ENCODE measurements at regions of chr11 and their contacts with region 1.

Region 1: DNA sequence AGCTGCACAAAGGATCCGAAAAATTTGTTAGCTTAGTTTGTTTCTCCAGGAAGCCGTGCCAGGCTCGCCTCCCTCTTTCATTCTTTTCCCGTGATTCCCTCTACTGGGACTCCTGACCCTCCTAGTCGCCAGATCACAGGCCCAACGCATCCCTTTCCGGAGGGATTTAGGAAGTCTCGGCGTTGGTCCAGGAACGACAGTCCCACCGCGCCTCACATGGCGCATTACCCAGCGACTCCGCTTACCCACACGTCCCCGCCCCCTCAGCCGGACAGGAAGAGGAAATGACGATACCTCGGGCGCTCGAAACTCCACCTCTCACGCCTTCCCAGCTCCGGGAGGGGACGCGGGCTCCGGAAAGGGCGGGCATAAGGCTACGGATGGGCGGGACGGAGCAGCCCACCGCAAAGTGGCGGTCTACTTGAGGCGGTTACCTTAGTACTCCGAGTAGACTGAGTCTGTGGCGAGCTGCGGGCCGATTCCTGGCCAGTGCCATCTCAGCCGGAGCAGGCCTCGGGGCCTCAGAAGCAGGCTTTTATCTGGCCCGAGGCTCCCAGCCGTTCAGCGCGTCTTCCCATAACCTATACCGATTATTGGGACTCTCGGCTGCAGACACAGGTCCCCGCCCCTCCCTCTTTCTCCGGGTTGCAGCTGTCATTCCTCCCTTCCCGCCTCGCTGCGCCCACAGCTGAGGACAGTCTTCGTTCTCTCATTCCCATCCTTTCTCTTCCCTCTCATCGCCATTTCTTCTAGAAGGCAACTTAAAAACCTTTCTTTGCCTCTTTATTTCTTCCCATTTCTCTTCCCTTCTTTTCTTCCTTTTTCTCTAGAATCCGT is at the start of gene CCDC15:
- DNase-seq: peak; percentile 88 to 98
- H3K4me3 ChIP-seq: peak within 1 kb of the TSS; percentile 62 to 71
- H3K27ac ChIP-seq: peak within 1 kb of the TSS; percentile 68 to 78
- H3K4me1 ChIP-seq: peaks cover 0 to 8% of the 10 kb centered on the region in 2 donors
- H3K27me3 ChIP-seq: no peaks in the 10 kb centered on the region
- CTCF ChIP-seq: no peak
- total RNA-seq, gene CCDC15: not detected

Region 2: GRCh38 chr11:124622531-124623451 is 331.2 kb before region 1 on chr11 and contains the start of gene TBRG1:
- intact Hi-C with region 1: loop called (anchors 5 kb)
- DNase-seq: peak; percentile 41 to 95
- H3K4me3 ChIP-seq: peak within 1 kb of the TSS; percentile 82 to 94
- H3K27ac ChIP-seq: peak within 1 kb of the TSS; percentile 92 to 98
- H3K4me1 ChIP-seq: peaks cover 0 to 3% of the 10 kb centered on the region in 2 donors
- H3K27me3 ChIP-seq: no peaks in the 10 kb centered on the region
- CTCF ChIP-seq: no peak
- total RNA-seq, gene TBRG1: 21.2 TPM

Region 3: GRCh38 chr11:124875943-124876817 is 77.8 kb before region 1 on chr11:
- intact Hi-C with region 1: loop called (anchors 5 kb)
- DNase-seq: peak; percentile 53 to 91
- H3K4me3 ChIP-seq: peak overlapping the region; percentile 69
- H3K27ac ChIP-seq: peak overlapping the region; percentile 75 to 84
- H3K4me1 ChIP-seq: peaks cover 3 to 7% of the 10 kb centered on the region in 2 donors
- H3K27me3 ChIP-seq: no peaks in the 10 kb centered on the region
- CTCF ChIP-seq: peak; percentile 55 to 77 (median 59)

Region 4: GRCh38 chr11:125053167-125053566 is 99.2 kb after region 1 on chr11:
- intact Hi-C with region 1: no loop called
- DNase-seq: no peak
- H3K4me3 ChIP-seq: no peak overlapping the region
- H3K27ac ChIP-seq: no peak overlapping the region
- H3K4me1 ChIP-seq: no peaks in the 10 kb centered on the region
- H3K27me3 ChIP-seq: no peaks in the 10 kb centered on the region
- CTCF ChIP-seq: no peak

Region 5: GRCh38 chr11:125345421-125346178 is 391.6 kb after region 1 on chr11:
- intact Hi-C with region 1: loop called (anchors 5 kb)
- DNase-seq: peak; percentile 46 to 90
- H3K4me3 ChIP-seq: peak overlapping the region in 1 of 2 donors; percentile 16
- H3K27ac ChIP-seq: peak overlapping the region; percentile 61 to 83
- H3K4me1 ChIP-seq: peaks cover 0 to 11% of the 10 kb centered on the region in 2 donors
- H3K27me3 ChIP-seq: no peaks in the 10 kb centered on the region
- CTCF ChIP-seq: peak; percentile 85 to 92 (median 88)

Measured in ascending aorta (tissue), 2 donors.